ENCODE measurements at regions of chr10 and their contacts with region 1.

Region 1: DNA sequence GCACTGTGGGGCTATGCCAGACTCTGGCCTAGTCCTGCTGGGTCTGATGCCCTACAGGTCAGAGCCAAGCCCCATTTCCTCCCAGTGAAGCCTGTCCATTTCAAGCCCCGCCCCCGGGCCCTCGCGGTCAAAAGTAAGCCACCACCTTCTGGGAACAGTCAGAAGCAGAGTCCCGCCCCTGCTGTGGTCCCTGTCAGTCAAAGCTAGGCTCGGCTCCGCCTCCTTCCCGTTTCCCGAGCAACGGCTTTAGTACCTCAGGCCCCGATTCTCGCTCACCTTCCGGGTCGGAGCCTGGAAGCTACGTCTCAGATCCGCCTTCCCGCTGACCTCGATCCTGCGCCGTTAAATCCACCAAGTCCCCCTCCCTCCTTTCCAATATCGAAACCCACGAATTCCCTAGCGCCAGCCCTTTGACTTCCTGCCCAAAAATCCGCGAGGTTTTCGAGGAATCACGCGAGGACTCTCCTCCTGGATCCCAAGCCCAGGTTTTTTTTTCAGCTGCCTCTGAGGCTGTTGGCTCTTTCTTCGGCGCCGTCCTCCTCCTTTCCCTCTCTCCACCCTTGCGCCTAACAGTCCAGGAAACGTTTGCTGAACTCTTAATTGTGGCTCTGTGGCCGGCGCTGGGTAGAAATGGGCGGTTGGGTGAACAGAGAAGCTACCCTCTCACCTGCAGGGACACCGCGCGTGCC is 11.8 kb downstream of the SFXN3 start:
- DNase-seq: peak; percentile 95
- CTCF ChIP-seq: no peak

Region 2: GRCh38 chr10:100998991-100999741 is 43.6 kb before region 1 on chr10:
- CTCF ChIA-PET with region 1: interaction called, 19 read pairs
- POLR2A ChIA-PET with region 1: no interaction called
- DNase-seq: peak; percentile 92
- CTCF ChIP-seq: peak; percentile 77

Region 3: DNA sequence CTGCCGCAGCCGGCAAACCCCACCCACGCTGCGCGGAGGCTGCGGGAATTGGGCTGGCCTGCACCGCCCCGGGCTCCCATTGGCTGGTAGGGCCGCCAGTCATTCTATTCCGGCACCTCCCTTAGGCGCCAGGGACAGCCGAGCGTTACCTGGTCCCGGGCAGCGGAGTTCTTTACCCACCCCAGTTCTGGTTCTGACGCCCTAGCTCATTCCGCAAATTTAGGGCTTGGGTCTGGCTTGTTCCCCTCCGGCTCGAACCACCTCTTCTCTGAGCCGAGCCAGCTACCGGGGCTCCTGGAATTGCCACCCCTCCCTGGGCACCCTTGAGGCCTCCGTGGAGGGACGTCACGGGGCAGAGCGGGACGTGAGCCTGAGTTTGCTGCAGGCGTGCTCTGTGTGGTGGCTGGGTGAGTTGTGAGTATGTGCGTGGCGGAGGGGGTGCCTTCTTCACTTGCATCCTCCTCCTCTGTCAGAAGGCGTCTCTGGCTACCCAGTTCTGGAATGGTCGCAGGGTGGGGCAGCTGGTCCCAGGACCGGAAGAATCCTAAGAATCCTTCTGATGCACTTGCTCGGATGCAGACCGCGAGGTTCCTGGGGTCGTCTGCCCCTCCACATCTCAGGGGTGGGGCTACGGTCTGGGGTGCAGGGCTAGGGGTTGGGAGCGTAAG is 11.5 kb before region 1 on chr10 and contains the starts of genes PDZD7 and SFXN3:
- CTCF ChIA-PET with region 1: interaction called, 95 read pairs
- POLR2A ChIA-PET with region 1: interaction called, 4 read pairs
- DNase-seq: peak; percentile 97
- CTCF ChIP-seq: no peak

Region 4: DNA sequence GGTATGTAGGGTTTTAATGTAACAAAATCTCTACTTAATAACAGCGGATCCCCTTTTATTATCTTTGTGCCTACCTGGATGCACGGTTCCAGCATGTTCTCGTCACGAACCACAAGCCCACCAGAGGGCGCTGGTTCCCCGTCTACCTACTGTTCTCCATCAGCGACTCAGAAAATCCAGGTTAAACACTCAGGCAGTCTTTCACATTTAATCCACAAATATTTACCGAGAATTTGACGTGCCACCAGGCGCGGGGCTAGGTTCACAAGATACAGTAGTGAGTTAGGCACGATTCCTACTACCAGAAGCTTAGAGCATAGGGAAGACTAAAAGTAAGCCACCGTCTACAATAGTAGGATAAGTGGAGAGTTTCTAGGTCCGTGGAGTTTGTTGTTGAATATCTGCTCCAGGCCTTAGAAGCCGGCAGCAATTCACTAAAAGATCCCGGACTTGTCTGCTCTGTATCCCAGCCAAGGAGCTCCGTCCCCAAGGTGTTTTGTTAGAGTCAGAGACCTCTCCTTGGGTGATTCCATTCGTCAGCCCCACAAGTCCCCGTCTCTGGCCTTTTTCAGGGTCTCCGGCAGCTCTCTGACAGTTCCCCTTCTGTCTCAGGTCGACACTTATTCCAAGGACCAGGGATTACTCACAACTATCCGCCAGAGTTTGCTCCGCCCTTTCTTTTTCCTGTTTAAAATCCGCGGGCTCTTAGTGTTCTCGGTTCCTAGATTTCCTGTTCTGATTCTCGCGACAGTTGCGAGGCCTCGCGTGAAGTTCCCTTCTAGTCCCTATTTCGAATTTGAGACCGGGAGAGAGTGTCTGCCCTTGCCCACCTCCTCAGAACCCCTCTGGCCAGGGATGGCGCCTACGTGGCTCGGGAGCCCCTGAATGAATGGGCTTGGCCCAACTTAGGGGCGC is 17.5 kb after region 1 on chr10:
- CTCF ChIA-PET with region 1: interaction called, 855 read pairs
- POLR2A ChIA-PET with region 1: no interaction called
- DNase-seq: peak; percentile 85
- CTCF ChIP-seq: peak; percentile 90